HAP-1 (cell line): ENCODE measurements at regions of chr3 and their contacts with region 1.

Region 1: GRCh38 chr3:194481103-194481502 is 5.7 kb downstream of the ATP13A3 start:
- DNase-seq: no peak
- H3K4me3 ChIP-seq: no peak overlapping the region
- H3K4me1 ChIP-seq: peaks cover 19% of the 10 kb centered on the region
- H3K27me3 ChIP-seq: no peaks in the 10 kb centered on the region

Region 2: DNA sequence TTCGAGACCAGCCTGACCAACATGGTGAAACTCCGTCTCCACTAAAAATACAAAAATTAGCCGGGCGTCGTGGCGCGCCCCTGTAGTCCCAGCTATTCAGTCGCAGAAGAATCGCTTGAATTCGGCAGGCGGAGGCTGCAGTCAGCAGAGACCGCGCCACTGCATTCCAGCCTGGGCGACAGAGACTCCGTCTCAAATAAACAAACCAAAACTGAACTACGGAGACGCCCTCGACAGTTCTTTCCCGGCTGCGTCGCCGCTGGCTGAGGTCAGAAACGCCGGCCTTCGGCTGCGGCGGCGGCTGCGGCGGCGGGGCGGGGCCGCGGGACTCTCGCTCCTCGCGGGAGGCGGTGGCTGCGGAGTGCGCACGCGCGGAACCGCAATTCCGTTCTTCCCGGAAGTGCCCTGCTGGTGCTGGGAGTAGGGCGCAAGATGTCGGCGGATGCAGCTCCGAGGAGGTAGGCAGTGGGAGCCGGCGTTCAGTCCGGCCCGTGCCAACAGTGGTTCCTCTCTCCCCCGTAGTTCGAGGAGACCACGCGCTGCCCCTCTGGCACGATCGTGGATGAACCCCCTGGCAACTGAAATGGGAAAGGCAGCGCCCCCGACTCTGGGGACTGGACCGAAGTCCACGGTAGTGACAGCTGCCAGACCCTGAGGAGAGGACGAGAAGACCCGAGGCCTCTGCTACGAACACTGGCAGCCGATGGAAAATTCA is 102.7 kb after region 1 on chr3:
- in situ Hi-C with region 1: loop called (anchors 5 kb)
- DNase-seq: peak; percentile 66 to 93
- H3K4me3 ChIP-seq: peak overlapping the region; percentile 91
- H3K4me1 ChIP-seq: peaks cover 13% of the 10 kb centered on the region
- H3K27me3 ChIP-seq: no peaks in the 10 kb centered on the region